ENCODE measurements at regions of chr1 and their contacts with region 1.

Region 1: DNA sequence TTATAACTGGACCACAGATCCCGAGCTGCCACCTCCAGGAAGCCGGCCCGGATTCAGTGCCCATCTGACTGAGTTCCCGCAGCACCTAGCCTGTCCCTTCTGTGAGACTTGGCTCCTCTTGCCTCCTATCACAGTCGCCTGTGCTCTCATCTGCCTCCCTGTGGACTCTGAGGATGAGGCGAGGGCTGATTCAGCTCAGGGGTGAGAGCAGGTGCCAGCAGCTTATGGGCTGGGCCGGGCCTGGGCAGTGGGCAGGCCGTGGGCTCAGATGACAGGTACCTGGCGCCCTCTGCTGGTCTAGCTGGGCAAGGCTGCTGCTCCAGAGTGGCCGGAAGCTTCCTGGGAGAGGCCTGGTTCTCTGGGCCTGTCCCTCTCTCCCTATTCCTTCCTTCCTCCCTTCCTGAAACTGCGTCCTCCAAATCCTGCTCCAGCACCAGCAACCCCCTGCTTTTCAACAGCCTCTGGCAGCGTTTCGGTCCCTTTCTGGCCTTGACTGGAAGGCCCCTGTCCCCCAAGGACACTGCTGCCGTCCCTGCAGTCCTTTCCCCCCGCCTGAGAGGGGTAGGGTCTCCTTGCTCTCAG is 17.3 kb upstream of the PCSK9 start:
- DNase-seq: peak; percentile 96
- ATAC-seq: peak; percentile 100
- H3K4me3 ChIP-seq: no peak overlapping the region
- H3K27ac ChIP-seq: no peak overlapping the region
- H3K4me1 ChIP-seq: peaks cover 11% of the 10 kb centered on the region
- H3K27me3 ChIP-seq: no peaks in the 10 kb centered on the region
- CTCF ChIP-seq: peak; percentile 94

Region 2: GRCh38 chr1:54857741-54858627 is 164.1 kb before region 1 on chr1:
- CTCF ChIA-PET with region 1: interaction called, 3 read pairs
- POLR2A ChIA-PET with region 1: no interaction called
- intact Hi-C with region 1: loop called (anchors 5 kb)
- DNase-seq: peak; percentile 89
- ATAC-seq: peak; percentile 73
- H3K4me3 ChIP-seq: no peak overlapping the region
- H3K27ac ChIP-seq: peak overlapping the region; percentile 89
- H3K4me1 ChIP-seq: peaks cover 49% of the 10 kb centered on the region
- H3K27me3 ChIP-seq: no peaks in the 10 kb centered on the region
- CTCF ChIP-seq: no peak

Region 3: GRCh38 chr1:54944610-54945544 is 77.2 kb before region 1 on chr1:
- CTCF ChIA-PET with region 1: interaction called, 51 read pairs
- POLR2A ChIA-PET with region 1: interaction called, 4 read pairs
- intact Hi-C with region 1: loop called (anchors 1 kb)
- DNase-seq: peak; percentile 89
- ATAC-seq: peak; percentile 65
- H3K4me3 ChIP-seq: no peak overlapping the region
- H3K27ac ChIP-seq: peak overlapping the region; percentile 52
- H3K4me1 ChIP-seq: peaks cover 22% of the 10 kb centered on the region
- H3K27me3 ChIP-seq: no peaks in the 10 kb centered on the region
- CTCF ChIP-seq: peak; percentile 93

Region 4: GRCh38 chr1:54996359-54996868 is 25.6 kb before region 1 on chr1:
- CTCF ChIA-PET with region 1: interaction called, 7 read pairs
- POLR2A ChIA-PET with region 1: no interaction called
- intact Hi-C with region 1: loop called (anchors 1 kb)
- DNase-seq: peak; percentile 84
- ATAC-seq: peak; percentile 95
- H3K4me3 ChIP-seq: peak overlapping the region; percentile 15; the same call in 1 of the 2 replicates
- H3K27ac ChIP-seq: no peak overlapping the region
- H3K4me1 ChIP-seq: no peaks in the 10 kb centered on the region
- H3K27me3 ChIP-seq: no peaks in the 10 kb centered on the region
- CTCF ChIP-seq: peak; percentile 93

Region 5: GRCh38 chr1:55007625-55008024 is 14.4 kb before region 1 on chr1:
- CTCF ChIA-PET with region 1: interaction called, 17 read pairs
- POLR2A ChIA-PET with region 1: no interaction called
- intact Hi-C with region 1: loop called (anchors 2 kb)
- DNase-seq: peak; percentile 74
- ATAC-seq: peak; percentile 96
- H3K4me3 ChIP-seq: no peak overlapping the region
- H3K27ac ChIP-seq: no peak overlapping the region
- H3K4me1 ChIP-seq: peaks cover 10% of the 10 kb centered on the region
- H3K27me3 ChIP-seq: no peaks in the 10 kb centered on the region
- CTCF ChIP-seq: no peak

Region 6: GRCh38 chr1:55117941-55118340 is 95.9 kb after region 1 on chr1:
- CTCF ChIA-PET with region 1: no interaction called
- POLR2A ChIA-PET with region 1: no interaction called
- intact Hi-C with region 1: no loop called
- DNase-seq: no peak
- ATAC-seq: no peak
- H3K4me3 ChIP-seq: no peak overlapping the region
- H3K27ac ChIP-seq: no peak overlapping the region
- H3K4me1 ChIP-seq: no peaks in the 10 kb centered on the region
- H3K27me3 ChIP-seq: no peaks in the 10 kb centered on the region
- CTCF ChIP-seq: no peak

Region 7: GRCh38 chr1:55506686-55507577 is 484.9 kb after region 1 on chr1:
- CTCF ChIA-PET with region 1: no interaction called
- POLR2A ChIA-PET with region 1: no interaction called
- intact Hi-C with region 1: no loop called
- DNase-seq: peak; percentile 96
- ATAC-seq: peak; percentile 78
- H3K4me3 ChIP-seq: peak overlapping the region; percentile 33; the same call in 1 of the 2 replicates
- H3K27ac ChIP-seq: peak overlapping the region; percentile 95
- H3K4me1 ChIP-seq: peaks cover 49% of the 10 kb centered on the region
- H3K27me3 ChIP-seq: no peaks in the 10 kb centered on the region
- CTCF ChIP-seq: peak; percentile 49; the same call in 1 of the 2 replicates

Measured in PC-3 (cell line).